ENCODE measurements at regions of chr2 and their contacts with region 1.

Region 1: GRCh38 chr2:28594289-28595108 is 98.6 kb downstream of the PLB1 start:
- DNase-seq: no peak
- H3K4me3 ChIP-seq: no peak overlapping the region
- CTCF ChIP-seq: peak; percentile 76

Region 2: DNA sequence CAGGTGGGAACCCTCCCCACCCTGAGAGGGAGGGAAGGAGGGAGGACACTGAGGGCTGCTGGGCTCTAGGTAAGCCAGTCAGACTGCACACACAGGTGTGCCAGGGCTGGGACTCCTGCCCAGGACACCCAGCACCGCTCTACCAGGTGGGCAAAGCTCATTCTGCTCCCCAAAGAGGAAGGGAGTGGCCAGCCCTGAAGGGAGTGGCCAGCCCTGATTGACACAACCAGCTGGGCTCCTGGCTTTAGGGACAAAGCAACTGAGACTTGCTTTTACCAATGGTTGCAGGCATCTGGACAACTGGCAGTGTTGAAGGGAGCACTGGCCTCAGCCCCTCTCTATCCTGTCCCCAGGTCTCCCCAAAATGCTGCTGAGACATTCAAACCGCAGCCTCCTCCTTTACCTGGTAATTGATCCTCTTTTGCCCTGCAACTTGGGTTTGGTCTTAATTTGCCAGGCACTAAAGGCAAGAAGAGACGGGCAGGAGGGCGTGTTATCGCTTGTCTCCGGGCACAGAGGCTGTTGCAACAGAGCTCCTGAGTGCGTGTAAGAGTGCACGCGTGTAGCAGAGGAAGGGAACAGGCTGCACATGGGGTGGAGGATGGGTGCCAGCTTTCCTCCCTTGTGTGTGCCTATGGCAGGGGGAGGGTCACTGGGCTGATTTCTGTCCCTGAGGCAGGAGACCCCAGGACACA is 216.4 kb before region 1 on chr2:
- CTCF ChIA-PET with region 1: no interaction called
- POLR2A ChIA-PET with region 1: no interaction called
- DNase-seq: no peak
- H3K4me3 ChIP-seq: no peak overlapping the region
- CTCF ChIP-seq: no peak

Region 3: GRCh38 chr2:28558158-28558820 is 36.2 kb before region 1 on chr2:
- CTCF ChIA-PET with region 1: interaction called, 12 read pairs
- POLR2A ChIA-PET with region 1: no interaction called
- DNase-seq: no peak
- H3K4me3 ChIP-seq: no peak overlapping the region
- CTCF ChIP-seq: no peak

Region 4: GRCh38 chr2:28583899-28584553 is 10.5 kb before region 1 on chr2:
- CTCF ChIA-PET with region 1: interaction called, 152 read pairs
- POLR2A ChIA-PET with region 1: interaction called, 4 read pairs
- DNase-seq: peak; percentile 55
- H3K4me3 ChIP-seq: peak overlapping the region; percentile 36
- CTCF ChIP-seq: no peak

Region 5: DNA sequence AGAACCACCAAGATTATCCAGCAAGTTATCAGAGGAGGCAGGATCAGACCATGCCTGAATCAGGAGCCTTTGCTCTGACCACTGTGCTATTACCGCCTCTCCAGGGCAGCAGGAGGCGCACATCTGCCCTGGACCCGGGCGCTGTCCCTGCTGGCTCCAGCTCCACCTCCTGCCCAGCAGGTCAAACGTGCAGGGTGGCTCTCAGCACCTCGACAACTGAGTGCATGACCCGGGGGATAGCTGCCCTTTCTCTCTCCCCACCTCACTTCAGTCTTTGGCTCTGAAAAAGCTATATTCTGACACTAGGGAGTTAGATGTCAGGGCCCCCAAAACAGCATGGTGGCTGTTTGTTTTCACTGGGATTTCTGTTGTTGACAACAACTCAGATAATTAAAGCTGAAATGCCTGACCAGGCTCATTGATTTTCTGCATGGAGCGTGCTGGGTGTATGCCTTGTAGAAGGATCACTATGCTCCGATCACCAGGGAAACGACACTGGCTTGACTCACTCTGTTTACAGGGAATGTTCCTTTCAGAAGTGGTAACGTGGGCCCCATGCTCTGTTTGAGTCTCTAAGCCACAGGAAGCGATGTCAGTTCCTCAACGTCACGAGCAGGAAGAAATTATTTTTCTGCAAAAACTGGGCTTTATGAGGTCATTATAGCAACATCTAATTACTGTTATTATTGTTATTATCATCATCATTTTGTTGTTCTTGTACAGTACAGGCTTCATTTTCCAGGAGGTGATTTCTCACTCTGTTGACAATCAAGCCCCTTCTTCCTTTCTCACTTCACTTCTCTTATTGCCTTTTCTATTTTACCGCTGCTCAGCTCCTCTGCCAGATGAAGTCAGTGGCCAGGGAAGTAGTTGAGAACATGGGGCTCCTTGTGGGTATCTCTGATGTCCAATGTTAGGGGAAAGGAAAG is 26.9 kb after region 1 on chr2:
- CTCF ChIA-PET with region 1: interaction called, 32 read pairs
- POLR2A ChIA-PET with region 1: no interaction called
- DNase-seq: no peak
- H3K4me3 ChIP-seq: no peak overlapping the region
- CTCF ChIP-seq: peak; percentile 18

Region 6: GRCh38 chr2:28764909-28765711 is 170.6 kb after region 1 on chr2:
- CTCF ChIA-PET with region 1: interaction called, 23 read pairs
- POLR2A ChIA-PET with region 1: no interaction called
- DNase-seq: peak; percentile 59
- H3K4me3 ChIP-seq: no peak overlapping the region
- CTCF ChIP-seq: no peak

Region 7: GRCh38 chr2:28801726-28802487 is 207.4 kb after region 1 on chr2:
- CTCF ChIA-PET with region 1: interaction called, 22 read pairs
- POLR2A ChIA-PET with region 1: no interaction called
- DNase-seq: no peak
- H3K4me3 ChIP-seq: no peak overlapping the region
- CTCF ChIP-seq: no peak